ENCODE measurements at regions of chr11 and their contacts with region 1.

Region 1: DNA sequence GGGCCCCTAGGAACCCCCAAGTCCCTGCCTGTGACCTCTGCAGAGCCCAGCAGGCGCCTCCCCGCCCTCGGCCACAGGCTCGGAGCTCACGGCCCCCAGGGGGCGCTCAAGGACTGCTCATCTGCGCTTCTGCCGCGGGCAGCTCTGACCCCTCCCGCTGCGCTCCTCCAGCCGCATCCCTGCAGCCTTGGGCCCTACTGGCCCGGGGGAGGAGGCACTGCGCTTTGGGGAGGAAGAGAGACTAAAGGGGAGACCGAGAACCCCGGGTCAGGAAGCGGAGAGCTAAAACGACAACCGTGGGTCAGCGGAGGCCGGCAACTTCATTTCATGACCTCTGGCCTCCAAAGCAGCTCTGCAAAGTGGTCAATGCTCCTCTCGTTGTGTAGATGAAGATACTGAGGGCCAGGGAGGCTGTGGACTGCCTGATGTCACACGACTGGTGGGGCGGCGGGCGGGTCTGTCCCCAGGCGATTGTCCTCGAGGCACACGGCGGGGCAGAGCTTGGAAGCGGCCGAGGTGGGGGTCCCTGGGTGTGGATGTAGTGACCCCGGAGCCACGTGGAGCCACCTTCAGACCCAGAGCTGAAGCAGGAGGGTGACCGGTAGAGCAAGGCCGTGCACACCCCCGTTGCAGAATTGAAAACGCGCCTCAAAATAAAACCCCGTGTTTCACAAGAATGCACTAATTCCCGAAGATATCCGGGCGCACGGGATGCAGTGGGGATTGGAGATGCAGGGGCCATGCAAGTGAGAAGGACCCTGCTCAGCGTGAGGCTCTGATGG is 2.7 kb upstream of the KRTAP5-6 start:
- DNase-seq: no peak
- H3K4me3 ChIP-seq: no peak overlapping the region
- H3K27me3 ChIP-seq: peaks cover 14% of the 10 kb centered on the region
- CTCF ChIP-seq: peak; percentile 93

Region 2: GRCh38 chr11:1618231-1618630 is 76.0 kb before region 1 on chr11:
- CTCF ChIA-PET with region 1: no interaction called
- POLR2A ChIA-PET with region 1: no interaction called
- DNase-seq: no peak
- H3K4me3 ChIP-seq: no peak overlapping the region
- H3K27me3 ChIP-seq: peaks cover 3% of the 10 kb centered on the region
- CTCF ChIP-seq: no peak

Region 3: DNA sequence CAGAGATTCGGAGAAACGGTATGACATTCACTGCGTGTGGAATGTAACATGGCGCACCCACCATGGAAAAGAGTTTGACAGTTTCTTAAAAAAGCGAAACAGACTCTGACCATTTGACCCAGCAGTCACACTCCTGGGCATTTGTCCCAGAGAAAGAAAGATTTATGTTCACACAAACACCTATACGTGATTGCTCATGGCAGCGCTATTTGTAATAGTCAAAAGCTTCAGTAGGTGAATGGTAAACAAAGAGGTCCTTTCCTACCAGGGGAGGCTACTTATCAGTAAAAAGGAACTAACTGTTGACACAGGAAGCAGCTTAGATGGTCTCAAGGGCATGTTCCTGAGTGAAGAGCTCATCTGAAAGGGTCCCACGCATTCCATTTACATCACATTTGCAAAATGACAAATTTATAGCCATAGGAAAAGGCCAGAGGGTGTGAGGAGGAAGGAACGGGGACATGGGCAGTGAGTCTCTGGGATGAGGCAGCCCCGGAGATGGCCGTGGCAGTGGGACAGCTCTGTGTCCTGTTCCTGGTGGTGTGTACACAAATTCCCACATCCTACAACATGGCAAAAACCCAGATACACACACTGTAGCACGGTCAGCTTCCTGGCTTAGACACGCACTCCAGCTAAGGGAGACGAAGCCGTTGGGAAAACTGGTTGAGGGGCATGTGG is 11.9 kb before region 1 on chr11:
- CTCF ChIA-PET with region 1: interaction called, 53 read pairs
- POLR2A ChIA-PET with region 1: no interaction called
- DNase-seq: no peak
- H3K4me3 ChIP-seq: no peak overlapping the region
- H3K27me3 ChIP-seq: no peaks in the 10 kb centered on the region
- CTCF ChIP-seq: no peak

Region 4: DNA sequence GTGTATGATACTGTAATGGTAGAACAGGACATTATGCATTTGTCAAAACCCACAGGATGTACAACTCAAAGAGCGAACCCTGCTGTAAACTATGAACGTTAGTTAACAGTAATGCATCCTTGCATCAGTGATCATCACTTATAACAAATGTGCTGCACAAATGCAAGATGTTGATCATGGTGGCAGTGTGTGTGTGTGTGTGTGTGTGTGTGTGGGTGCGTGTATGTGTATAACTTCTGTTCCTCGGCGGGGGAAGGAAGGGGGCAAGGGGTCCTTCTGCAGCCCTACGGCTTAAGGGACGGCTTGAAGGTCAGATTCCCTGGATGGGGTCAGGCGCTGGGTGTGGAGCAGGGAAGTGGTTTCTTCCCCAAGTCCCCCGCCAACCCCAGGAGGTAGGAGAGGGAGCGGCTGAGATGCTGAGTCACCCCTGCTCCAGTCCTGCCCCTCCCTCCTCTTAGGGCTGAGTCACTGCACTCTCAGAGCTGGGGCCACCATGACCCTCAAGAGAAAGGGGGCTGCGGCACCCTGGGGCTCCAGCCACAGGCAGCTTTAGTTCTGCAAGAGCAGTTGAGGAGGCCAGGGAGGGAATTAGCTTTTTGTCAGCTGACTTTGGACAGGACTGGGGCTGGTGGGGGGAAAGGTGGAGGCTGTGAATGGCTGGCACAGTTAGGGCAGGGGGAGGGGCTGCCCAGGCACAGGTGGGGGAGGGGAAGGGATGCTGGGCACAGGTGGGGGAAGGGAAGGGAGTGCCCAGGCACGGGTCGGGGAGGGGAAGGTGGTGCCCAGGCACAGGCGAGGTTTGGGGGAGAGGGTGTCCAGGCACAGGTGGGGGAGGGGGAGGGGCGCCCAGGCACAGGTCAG is 78.2 kb after region 1 on chr11:
- CTCF ChIA-PET with region 1: interaction called, 10 read pairs
- POLR2A ChIA-PET with region 1: no interaction called
- DNase-seq: peak; percentile 72
- H3K4me3 ChIP-seq: no peak overlapping the region
- H3K27me3 ChIP-seq: 0 out of 2 replicates have a peak, but pooled peaks cover 1% of the 10 kb centered on the region
- CTCF ChIP-seq: no peak

Region 5: GRCh38 chr11:1837171-1838076 is 143.2 kb after region 1 on chr11:
- CTCF ChIA-PET with region 1: interaction called, 510 read pairs
- POLR2A ChIA-PET with region 1: no interaction called
- DNase-seq: no peak
- H3K4me3 ChIP-seq: no peak overlapping the region
- H3K27me3 ChIP-seq: no peaks in the 10 kb centered on the region; the same call in 1 of the 2 replicates
- CTCF ChIP-seq: peak; percentile 93

Region 6: GRCh38 chr11:1882519-1883238 is 188.4 kb after region 1 on chr11:
- CTCF ChIA-PET with region 1: interaction called, 34 read pairs
- POLR2A ChIA-PET with region 1: no interaction called
- DNase-seq: no peak
- H3K4me3 ChIP-seq: no peak overlapping the region
- H3K27me3 ChIP-seq: no peaks in the 10 kb centered on the region; the same call in none of the 2 replicates
- CTCF ChIP-seq: peak; percentile 94